Activated B cell treated with CpG ODN at 0.5 μM for 24 hours (primary cell): ENCODE measurements at regions of chr6 and their contacts with region 1.

Region 1: DNA sequence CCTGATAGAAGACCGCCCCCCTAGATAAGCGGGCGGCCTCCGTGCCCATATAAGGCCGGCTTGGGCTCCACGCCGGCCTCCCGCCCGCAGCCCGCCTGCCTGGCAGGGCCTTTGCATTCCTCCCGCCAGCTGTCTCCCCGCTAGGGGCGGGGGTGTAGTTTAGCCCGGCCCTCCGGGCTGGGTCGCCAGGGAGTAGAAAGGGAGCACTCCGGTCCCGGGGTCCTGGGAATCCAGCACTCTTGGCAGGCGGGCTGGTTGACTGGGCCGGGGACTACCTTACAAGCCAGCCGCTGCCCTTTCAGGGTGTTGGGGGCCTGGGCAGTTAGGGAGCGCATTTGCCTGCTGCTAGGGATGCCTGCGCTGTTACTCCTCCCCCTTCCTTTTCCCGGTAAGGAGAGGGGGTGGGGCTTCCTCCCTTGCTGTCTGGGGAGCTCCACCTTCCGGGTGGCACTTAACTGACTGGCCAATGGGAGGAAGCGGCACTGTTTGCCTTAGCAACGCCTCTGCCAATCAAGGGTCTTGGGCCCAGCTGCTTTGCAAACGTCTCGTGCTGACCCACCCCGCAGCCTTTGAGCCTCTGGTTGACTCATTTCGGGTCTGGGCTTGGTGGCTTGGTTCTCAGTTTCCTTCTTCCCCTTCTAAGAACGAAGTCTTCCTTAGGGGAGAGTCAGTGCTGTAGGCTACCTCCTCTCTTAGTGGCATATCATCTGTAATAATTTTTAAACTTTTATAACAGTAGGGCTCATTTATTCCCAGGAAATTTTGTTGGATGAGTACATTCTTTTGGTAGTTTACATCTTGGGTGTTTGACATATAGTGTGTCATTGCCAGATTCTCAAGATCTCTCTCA is 3.4 kb downstream of the SRF start:
- DNase-seq: peak; percentile 77
- ATAC-seq: peak; percentile 71
- H3K4me3 Mint-ChIP-seq: peak overlapping the region; percentile 73
- H3K27ac Mint-ChIP-seq: peak overlapping the region; percentile 90
- H3K4me1 Mint-ChIP-seq: peaks cover 48% of the 10 kb centered on the region
- H3K27me3 Mint-ChIP-seq: no peaks in the 10 kb centered on the region
- CTCF ChIP-seq: no peak

Region 2: GRCh38 chr6:42879372-42880239 is 294.9 kb before region 1 on chr6 and contains the start of gene RPL7L1:
- CTCF ChIA-PET with region 1: no interaction called
- POLR2A ChIA-PET with region 1: interaction called, 6 read pairs
- intact Hi-C with region 1: loop called (anchors 1 kb)
- DNase-seq: peak; percentile 76
- ATAC-seq: peak; percentile 92
- H3K4me3 Mint-ChIP-seq: peak within 1 kb of the TSS; percentile 100
- H3K27ac Mint-ChIP-seq: peak within 1 kb of the TSS; percentile 99
- H3K4me1 Mint-ChIP-seq: peaks cover 28% of the 10 kb centered on the region
- H3K27me3 Mint-ChIP-seq: no peaks in the 10 kb centered on the region
- CTCF ChIP-seq: no peak
- total RNA-seq, gene RPL7L1: 94.5 and 110 TPM in 2 replicates

Region 3: DNA sequence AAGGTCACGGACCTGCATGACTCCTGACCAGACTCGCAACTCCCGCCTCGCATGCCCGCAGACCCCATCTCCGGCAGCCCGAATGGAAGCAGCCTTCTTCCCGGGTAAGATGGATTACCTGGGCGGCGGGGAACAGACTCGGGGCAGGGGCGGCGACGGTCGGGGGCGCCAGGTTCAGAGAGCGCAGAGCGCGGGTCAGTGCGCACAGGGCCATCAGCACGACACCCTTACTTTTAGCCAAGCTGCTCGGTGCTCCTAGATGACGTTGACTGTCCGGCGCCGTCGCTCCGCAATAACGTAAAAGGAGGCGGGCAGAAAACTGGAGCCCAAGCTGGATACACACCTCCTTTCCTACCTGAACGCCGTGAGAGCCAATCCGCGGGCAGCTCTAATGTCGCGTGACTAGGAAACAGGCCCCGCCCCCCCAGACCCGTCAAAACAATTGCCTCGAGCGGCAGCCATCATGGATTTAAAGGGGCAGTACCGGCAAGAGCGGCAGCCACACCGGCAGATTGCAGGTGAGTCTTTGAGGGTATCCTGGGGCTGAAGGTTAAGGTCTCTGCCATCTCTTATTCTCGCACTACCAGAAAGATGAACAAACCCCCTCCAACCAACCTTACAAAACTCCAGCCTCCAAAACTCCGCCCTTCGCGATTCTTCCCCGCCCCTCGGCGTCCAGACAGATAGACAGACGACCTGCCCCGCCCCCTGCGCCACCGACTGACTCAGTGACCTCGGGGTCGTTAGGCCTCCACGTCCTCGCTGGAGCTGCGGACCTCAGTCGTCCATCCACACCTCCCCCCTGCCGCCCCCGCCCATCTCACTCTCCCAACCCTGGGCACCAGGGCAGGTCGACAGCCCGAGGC is 115.1 kb before region 1 on chr6 and contains the starts of genes KLC4 and MRPL2:
- CTCF ChIA-PET with region 1: no interaction called
- POLR2A ChIA-PET with region 1: interaction called, 10 read pairs
- intact Hi-C with region 1: loop called (anchors 1 kb)
- DNase-seq: peak; percentile 94
- ATAC-seq: peak; percentile 97
- H3K4me3 Mint-ChIP-seq: peak within 1 kb of the TSS; percentile 95
- H3K27ac Mint-ChIP-seq: peak within 1 kb of the TSS; percentile 97
- H3K4me1 Mint-ChIP-seq: peaks cover 38% of the 10 kb centered on the region
- H3K27me3 Mint-ChIP-seq: no peaks in the 10 kb centered on the region
- CTCF ChIP-seq: no peak
- total RNA-seq, gene KLC4: 17.0 and 19.8 TPM in 2 replicates
- total RNA-seq, gene MRPL2: 43.9 and 47.8 TPM in 2 replicates

Region 4: GRCh38 chr6:43150051-43150751 is 24.3 kb before region 1 on chr6:
- CTCF ChIA-PET with region 1: no interaction called
- POLR2A ChIA-PET with region 1: no interaction called
- intact Hi-C with region 1: no loop called
- DNase-seq: no peak
- ATAC-seq: no peak
- H3K4me3 Mint-ChIP-seq: no peak overlapping the region
- H3K27ac Mint-ChIP-seq: no peak overlapping the region
- H3K4me1 Mint-ChIP-seq: no peaks in the 10 kb centered on the region
- H3K27me3 Mint-ChIP-seq: peaks cover 4% of the 10 kb centered on the region
- CTCF ChIP-seq: no peak

Region 5: DNA sequence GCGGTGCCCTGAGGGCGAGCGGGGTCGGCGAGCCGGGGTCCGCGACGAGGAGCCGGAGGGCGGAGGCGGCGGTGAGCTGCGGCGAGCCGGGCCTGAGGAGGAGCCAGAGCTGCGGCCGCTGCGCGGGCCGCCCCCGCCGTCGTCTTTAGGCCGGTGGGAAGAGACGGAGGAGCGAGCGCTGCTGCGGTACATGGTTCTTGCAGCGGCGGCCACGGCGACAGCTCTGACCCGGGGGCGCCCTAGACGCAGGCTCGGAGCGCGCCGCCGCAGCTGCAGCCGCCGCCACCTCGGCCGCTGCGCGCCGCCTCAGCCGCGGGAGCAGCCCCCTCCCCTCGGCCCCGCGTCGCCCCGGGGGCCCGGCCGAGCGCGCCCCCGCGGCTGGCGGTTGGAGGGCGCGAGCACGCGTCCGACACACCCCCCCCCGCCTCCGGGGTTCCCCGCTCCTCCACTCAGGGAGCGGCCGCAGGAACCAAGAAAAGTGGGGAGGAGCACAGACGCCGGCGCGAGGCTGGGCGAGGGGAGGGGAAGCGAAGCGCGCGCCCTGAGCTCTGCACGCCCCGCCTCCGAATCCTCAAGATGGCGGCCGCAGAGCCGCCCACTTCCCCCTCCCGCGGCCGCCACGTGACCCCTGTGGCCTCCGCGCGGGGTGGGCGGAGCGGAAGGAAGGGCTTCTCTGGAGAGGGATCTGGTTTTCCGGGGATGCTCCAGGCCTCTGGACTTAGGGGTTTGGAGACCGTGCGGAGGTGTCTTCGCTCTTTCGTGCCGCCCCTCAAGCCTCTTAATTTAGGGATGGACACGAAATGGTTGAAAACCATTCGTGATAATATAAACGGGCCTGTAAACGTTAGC is 194.9 kb after region 1 on chr6 and contains the start of gene ZNF318:
- CTCF ChIA-PET with region 1: no interaction called
- POLR2A ChIA-PET with region 1: interaction called, 4 read pairs
- intact Hi-C with region 1: loop called (anchors 1 kb)
- DNase-seq: peak; percentile 92
- ATAC-seq: peak; percentile 90
- H3K4me3 Mint-ChIP-seq: peak within 1 kb of the TSS; percentile 95
- H3K27ac Mint-ChIP-seq: peak within 1 kb of the TSS; percentile 94
- H3K4me1 Mint-ChIP-seq: peaks cover 79% of the 10 kb centered on the region
- H3K27me3 Mint-ChIP-seq: no peaks in the 10 kb centered on the region
- CTCF ChIP-seq: no peak
- total RNA-seq, gene ZNF318: 135 and 159 TPM in 2 replicates

Region 6: GRCh38 chr6:43516697-43517504 is 342.4 kb after region 1 on chr6 and contains the starts of genes POLR1C and YIPF3:
- CTCF ChIA-PET with region 1: no interaction called
- POLR2A ChIA-PET with region 1: no interaction called
- intact Hi-C with region 1: loop called (anchors 2 kb)
- DNase-seq: peak; percentile 87
- ATAC-seq: peak; percentile 94
- H3K4me3 Mint-ChIP-seq: no peak within 1 kb of the TSS
- H3K27ac Mint-ChIP-seq: peak within 1 kb of the TSS; percentile 54
- H3K4me1 Mint-ChIP-seq: peaks cover 29% of the 10 kb centered on the region
- H3K27me3 Mint-ChIP-seq: no peaks in the 10 kb centered on the region
- CTCF ChIP-seq: no peak
- total RNA-seq, gene POLR1C: 67.7 and 75.6 TPM in 2 replicates
- total RNA-seq, gene YIPF3: 51.7 and 59.1 TPM in 2 replicates